OCI-LY7 (cell line): ENCODE measurements at regions of chr7 and their contacts with region 1.

Region 1: GRCh38 chr7:131327626-131328376 is at the start of gene MKLN1:
- DNase-seq: peak; percentile 86
- H3K4me3 ChIP-seq: peak within 1 kb of the TSS; percentile 99
- H3K27ac ChIP-seq: peak within 1 kb of the TSS; percentile 72
- H3K4me1 ChIP-seq: peaks cover 30% of the 10 kb centered on the region
- CTCF ChIP-seq: no peak
- total RNA-seq, gene MKLN1: 10.8 and 12.1 TPM in 2 replicates

Region 2: GRCh38 chr7:130912862-130913631 is 414.8 kb before region 1 on chr7:
- CTCF ChIA-PET with region 1: no interaction called
- POLR2A ChIA-PET with region 1: no interaction called
- intact Hi-C with region 1: loop called (anchors 5 kb)
- DNase-seq: peak; percentile 78
- H3K4me3 ChIP-seq: peak overlapping the region; percentile 74
- H3K27ac ChIP-seq: peak overlapping the region; percentile 79
- H3K4me1 ChIP-seq: peaks cover 26% of the 10 kb centered on the region
- CTCF ChIP-seq: no peak

Region 3: DNA sequence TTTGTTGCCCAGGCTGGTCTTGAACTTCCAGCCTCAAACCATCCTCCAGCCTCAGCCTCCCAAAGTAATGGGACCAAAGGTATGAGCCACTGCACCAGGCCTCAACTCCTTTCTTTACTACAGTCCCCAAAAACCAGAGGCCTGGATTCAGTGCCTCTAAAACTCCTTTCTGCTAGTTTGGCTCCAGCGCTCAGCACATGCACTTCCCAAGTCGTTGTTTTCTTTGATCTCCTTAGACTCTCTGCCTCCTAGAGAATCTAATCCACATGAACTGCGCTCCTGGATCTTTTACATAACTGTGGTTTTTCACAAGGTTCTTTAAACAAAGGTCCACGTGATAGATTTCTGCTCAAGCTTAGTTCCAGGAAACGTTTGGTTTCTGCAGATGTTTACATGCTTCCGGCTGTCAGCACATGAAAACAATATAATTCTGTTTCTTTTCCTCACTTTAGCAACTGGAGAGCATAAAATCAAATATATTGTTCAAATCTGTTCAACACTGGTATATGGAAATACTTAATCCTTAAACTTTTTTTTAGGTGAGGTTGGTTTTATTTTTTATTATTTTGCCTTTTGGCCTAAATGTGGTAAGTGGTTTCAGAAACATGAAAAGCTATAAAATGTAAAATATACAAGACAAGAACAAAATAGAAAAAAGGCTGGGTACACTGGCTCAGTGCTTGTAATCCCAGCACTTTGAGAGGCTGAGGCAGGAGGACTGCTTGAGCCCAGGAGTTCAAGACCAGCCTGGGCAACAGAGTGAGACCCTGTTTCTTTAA is 270.6 kb before region 1 on chr7:
- CTCF ChIA-PET with region 1: interaction called, 3 read pairs
- POLR2A ChIA-PET with region 1: interaction called, 10 read pairs
- intact Hi-C with region 1: no loop called
- DNase-seq: peak; percentile 73
- H3K4me3 ChIP-seq: peak overlapping the region; percentile 25
- H3K27ac ChIP-seq: peak overlapping the region; percentile 85
- H3K4me1 ChIP-seq: peaks cover 31% of the 10 kb centered on the region
- CTCF ChIP-seq: no peak

Region 4: DNA sequence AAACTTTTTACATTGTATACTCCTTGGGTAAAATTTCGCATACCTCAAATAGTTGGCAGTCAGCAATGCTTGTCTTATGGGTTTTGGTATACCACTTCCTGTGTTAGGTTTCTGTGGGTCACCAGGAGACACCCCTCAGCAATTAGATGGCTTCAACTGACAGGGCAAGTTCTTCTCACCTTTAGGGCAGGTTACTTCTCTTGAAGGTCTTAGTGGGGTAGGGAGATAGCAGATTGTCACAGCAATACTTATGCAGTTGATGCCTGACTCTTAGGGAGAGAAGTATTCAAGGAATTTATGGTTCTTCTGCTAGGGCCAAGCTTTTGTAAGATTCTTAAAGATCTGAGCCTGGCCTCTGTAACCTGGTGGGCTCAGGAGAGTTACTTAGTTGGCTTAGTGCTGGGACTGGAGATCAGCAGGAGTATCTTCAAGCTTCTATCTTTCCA is 42.7 kb after region 1 on chr7:
- CTCF ChIA-PET with region 1: no interaction called
- POLR2A ChIA-PET with region 1: no interaction called
- intact Hi-C with region 1: no loop called
- DNase-seq: peak; percentile 35
- H3K4me3 ChIP-seq: no peak overlapping the region
- H3K27ac ChIP-seq: no peak overlapping the region
- H3K4me1 ChIP-seq: peaks cover 21% of the 10 kb centered on the region
- CTCF ChIP-seq: no peak

Region 5: GRCh38 chr7:131385039-131385605 is 57.3 kb after region 1 on chr7:
- CTCF ChIA-PET with region 1: no interaction called
- POLR2A ChIA-PET with region 1: no interaction called
- intact Hi-C with region 1: loop called (anchors 5 kb)
- DNase-seq: no peak
- H3K4me3 ChIP-seq: no peak overlapping the region
- H3K27ac ChIP-seq: no peak overlapping the region
- H3K4me1 ChIP-seq: no peaks in the 10 kb centered on the region
- CTCF ChIP-seq: no peak